ENCODE measurements at regions of chr12 and their contacts with region 1.

Region 1: DNA sequence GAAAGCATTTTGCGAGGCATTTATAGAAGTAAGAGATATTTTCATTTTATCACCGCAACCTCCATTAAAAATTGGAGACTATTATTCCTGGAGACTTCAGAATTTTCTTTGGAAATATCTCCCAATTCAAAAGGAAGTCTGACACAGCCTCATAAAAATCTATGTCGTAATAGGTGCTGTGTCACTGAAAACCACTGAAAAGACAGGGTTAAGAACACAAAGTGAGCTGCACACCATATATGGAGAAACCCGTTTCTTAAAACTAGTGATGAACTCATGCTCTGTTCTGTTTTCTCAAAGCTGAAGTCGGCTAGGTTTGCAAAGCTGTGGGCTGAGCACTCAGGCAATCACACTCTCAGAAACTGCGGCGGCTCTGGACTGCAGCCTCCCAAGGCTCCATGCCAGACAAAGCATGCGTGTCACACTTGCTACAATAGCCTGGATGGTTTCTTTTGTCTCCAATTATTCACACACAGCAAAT is at the start of gene GLIPR1:
- DNase-seq: peak; percentile 43 to 84 (median 77)
- H3K4me3 ChIP-seq: peak within 1 kb of the TSS; percentile 80
- H3K4me3 Mint-ChIP-seq: peak within 1 kb of the TSS; percentile 96 to 99 (median 97)
- H3K27ac ChIP-seq: peak within 1 kb of the TSS; percentile 80
- H3K27ac Mint-ChIP-seq: peak within 1 kb of the TSS; percentile 86 to 98 (median 97)
- H3K4me1 ChIP-seq: peaks cover 65% of the 10 kb centered on the region
- H3K4me1 Mint-ChIP-seq: peaks cover 75 to 83% (median 83%) of the 10 kb centered on the region in 3 donors
- H3K27me3 ChIP-seq: no peaks in the 10 kb centered on the region
- H3K27me3 Mint-ChIP-seq: peaks cover 0 to 2% of the 10 kb centered on the region in 2 donors
- total RNA-seq, gene GLIPR1: 22.2 to 22.8 TPM

Region 2: DNA sequence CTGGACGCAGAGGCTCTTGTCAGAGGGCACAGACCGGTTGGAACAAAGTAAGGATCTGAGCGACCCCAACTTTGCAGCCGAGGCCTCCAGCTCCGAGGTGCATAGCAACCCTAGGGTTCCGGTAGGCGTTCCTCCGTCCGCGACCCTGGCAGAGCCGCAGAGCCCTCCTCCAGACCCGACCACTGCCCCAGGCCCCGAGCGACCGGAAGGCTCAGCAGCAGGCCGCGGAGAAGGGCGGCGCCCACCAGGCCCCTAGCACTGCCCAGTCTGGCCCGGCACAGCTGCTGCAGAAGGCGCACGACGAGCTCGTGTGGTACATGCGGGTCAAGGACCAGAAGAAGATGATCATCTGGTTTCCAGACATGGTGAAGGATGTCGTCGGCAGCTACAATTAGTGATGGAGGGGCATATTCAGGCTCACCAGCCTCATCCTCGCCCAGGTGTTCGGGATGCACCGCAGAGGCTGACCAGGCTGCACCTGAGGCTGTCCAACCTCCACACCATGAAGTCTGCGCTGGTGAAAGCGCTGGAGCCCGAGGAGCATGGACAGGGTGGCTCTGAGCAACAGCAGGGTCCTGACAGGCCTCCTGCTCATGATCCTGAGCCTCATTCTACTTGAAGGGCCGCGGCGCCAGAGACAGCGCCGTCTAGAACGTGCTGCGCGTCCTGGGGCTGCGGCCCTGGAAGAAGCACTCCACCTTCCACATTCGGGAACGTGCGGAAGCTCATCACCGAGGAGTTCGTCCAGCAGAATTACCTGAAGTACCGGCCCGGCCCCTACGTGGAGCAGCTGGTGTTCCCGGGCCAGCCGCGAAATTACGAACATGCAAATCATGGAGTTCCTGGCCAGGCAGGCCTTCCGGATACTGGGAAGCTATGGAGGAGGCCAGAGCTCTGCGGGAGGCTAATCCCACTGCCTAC is 174.8 kb before region 1 on chr12:
- CTCF ChIA-PET with region 1: no interaction called
- POLR2A ChIA-PET with region 1: interaction called, 10 read pairs
- DNase-seq: no peak
- H3K4me3 ChIP-seq: no peak overlapping the region
- H3K4me3 Mint-ChIP-seq: no peak overlapping the region
- H3K27ac ChIP-seq: no peak overlapping the region
- H3K27ac Mint-ChIP-seq: no peak overlapping the region
- H3K4me1 ChIP-seq: no peaks in the 10 kb centered on the region
- H3K4me1 Mint-ChIP-seq: no peaks in the 10 kb centered on the region
- H3K27me3 ChIP-seq: no peaks in the 10 kb centered on the region
- H3K27me3 Mint-ChIP-seq: no peaks in the 10 kb centered on the region

Region 3: DNA sequence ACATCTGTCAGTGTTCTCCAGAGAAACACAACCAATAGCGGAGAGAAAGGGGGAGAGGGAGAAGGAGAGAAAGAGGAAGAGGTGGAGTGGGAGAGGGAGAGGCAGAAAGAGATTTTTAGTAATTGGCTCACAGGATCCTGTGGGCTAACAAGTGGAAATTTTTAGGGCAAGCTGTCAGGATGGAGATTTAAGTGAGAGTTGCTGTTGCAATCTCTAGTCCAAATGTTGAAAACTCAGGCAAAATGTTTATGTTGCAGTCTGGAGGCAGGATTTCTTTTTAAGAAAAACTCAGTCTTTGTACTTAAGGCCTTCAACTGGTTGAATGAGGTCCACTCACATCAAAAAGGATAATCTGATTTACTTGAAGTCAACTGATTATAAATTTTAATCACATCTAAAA is 102.2 kb before region 1 on chr12:
- CTCF ChIA-PET with region 1: no interaction called
- POLR2A ChIA-PET with region 1: no interaction called
- DNase-seq: no peak
- H3K4me3 ChIP-seq: no peak overlapping the region
- H3K4me3 Mint-ChIP-seq: no peak overlapping the region
- H3K27ac ChIP-seq: no peak overlapping the region
- H3K27ac Mint-ChIP-seq: no peak overlapping the region
- H3K4me1 ChIP-seq: no peaks in the 10 kb centered on the region
- H3K4me1 Mint-ChIP-seq: no peaks in the 10 kb centered on the region
- H3K27me3 ChIP-seq: no peaks in the 10 kb centered on the region
- H3K27me3 Mint-ChIP-seq: peaks cover 0 to 1% of the 10 kb centered on the region in 2 donors

Region 4: DNA sequence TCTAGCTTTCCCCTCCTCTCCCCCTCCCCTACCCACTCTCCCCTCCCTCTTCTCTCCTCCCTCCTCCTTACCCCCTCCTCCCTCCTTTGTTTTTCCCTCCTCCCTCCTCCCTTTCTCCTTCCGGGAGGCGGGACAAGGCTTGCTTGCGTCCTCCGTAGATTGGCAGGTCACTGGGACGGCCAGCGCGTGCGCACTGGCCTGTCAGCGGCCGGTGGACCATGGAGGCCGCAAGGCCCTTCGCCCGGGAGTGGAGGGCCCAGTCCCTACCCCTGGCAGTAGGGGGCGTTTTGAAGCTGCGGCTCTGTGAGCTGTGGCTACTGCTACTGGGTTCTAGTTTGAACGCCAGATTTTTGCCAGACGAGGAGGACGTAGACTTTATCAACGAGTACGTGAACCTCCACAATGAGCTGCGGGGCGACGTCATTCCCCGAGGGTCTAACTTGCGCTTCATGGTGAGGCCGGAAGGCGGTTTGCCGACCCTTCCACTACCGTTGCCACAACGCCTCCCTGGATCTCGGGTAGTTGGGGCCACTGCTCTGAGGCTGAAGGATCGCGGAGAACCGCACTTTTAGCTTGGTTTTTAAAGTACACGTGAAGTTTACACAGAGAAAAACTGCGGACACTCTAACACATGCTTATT is 89.5 kb before region 1 on chr12 and contains the start of gene GLIPR1L2:
- CTCF ChIA-PET with region 1: interaction called, 25 read pairs
- POLR2A ChIA-PET with region 1: interaction called, 12 read pairs
- DNase-seq: peak; percentile 78 to 92 (median 83)
- H3K4me3 ChIP-seq: peak within 1 kb of the TSS; percentile 94
- H3K4me3 Mint-ChIP-seq: peak within 1 kb of the TSS; percentile 89 to 96 (median 95)
- H3K27ac ChIP-seq: peak within 1 kb of the TSS; percentile 83
- H3K27ac Mint-ChIP-seq: peak within 1 kb of the TSS; percentile 96 to 99 (median 98)
- H3K4me1 ChIP-seq: peaks cover 27% of the 10 kb centered on the region
- H3K4me1 Mint-ChIP-seq: peaks cover 48 to 74% (median 50%) of the 10 kb centered on the region in 3 donors
- H3K27me3 ChIP-seq: no peaks in the 10 kb centered on the region
- H3K27me3 Mint-ChIP-seq: no peaks in the 10 kb centered on the region
- total RNA-seq, gene GLIPR1L2: not detected

Region 5: GRCh38 chr12:75414671-75415070 is 65.8 kb before region 1 on chr12:
- CTCF ChIA-PET with region 1: no interaction called
- POLR2A ChIA-PET with region 1: no interaction called
- DNase-seq: no peak
- H3K4me3 ChIP-seq: no peak overlapping the region
- H3K4me3 Mint-ChIP-seq: no peak overlapping the region
- H3K27ac ChIP-seq: no peak overlapping the region
- H3K27ac Mint-ChIP-seq: no peak overlapping the region
- H3K4me1 ChIP-seq: no peaks in the 10 kb centered on the region
- H3K4me1 Mint-ChIP-seq: no peaks in the 10 kb centered on the region
- H3K27me3 ChIP-seq: no peaks in the 10 kb centered on the region
- H3K27me3 Mint-ChIP-seq: no peaks in the 10 kb centered on the region

Region 6: GRCh38 chr12:75437564-75437963 is 42.9 kb before region 1 on chr12:
- CTCF ChIA-PET with region 1: interaction called, 47 read pairs
- POLR2A ChIA-PET with region 1: interaction called, 5 read pairs
- DNase-seq: peak in 1 of 5 donors; percentile 33
- H3K4me3 ChIP-seq: no peak overlapping the region
- H3K4me3 Mint-ChIP-seq: no peak overlapping the region
- H3K27ac ChIP-seq: no peak overlapping the region
- H3K27ac Mint-ChIP-seq: peak overlapping the region in 1 of 8 donors; percentile 10
- H3K4me1 ChIP-seq: peaks cover 8% of the 10 kb centered on the region
- H3K4me1 Mint-ChIP-seq: peaks cover 4 to 15% (median 10%) of the 10 kb centered on the region in 3 donors
- H3K27me3 ChIP-seq: no peaks in the 10 kb centered on the region
- H3K27me3 Mint-ChIP-seq: peaks cover 0 to 4% of the 10 kb centered on the region in 2 donors

Region 7: GRCh38 chr12:75455831-75456230 is 24.7 kb before region 1 on chr12:
- CTCF ChIA-PET with region 1: interaction called, 27 read pairs
- POLR2A ChIA-PET with region 1: interaction called, 7 read pairs
- DNase-seq: no peak
- H3K4me3 ChIP-seq: no peak overlapping the region
- H3K4me3 Mint-ChIP-seq: peak overlapping the region in 1 of 7 donors; percentile 1
- H3K27ac ChIP-seq: no peak overlapping the region
- H3K27ac Mint-ChIP-seq: peak overlapping the region in 1 of 8 donors; percentile 3
- H3K4me1 ChIP-seq: peaks cover 36% of the 10 kb centered on the region
- H3K4me1 Mint-ChIP-seq: peaks cover 48 to 56% (median 50%) of the 10 kb centered on the region in 3 donors
- H3K27me3 ChIP-seq: no peaks in the 10 kb centered on the region
- H3K27me3 Mint-ChIP-seq: no peaks in the 10 kb centered on the region

Region 8: GRCh38 chr12:75505706-75506312 is 25.3 kb after region 1 on chr12:
- CTCF ChIA-PET with region 1: interaction called, 14 read pairs
- POLR2A ChIA-PET with region 1: interaction called, 10 read pairs
- DNase-seq: no peak
- H3K4me3 ChIP-seq: no peak overlapping the region
- H3K4me3 Mint-ChIP-seq: no peak overlapping the region
- H3K27ac ChIP-seq: no peak overlapping the region
- H3K27ac Mint-ChIP-seq: peak overlapping the region in 7 of 8 donors; percentile 3 to 91 (median 44)
- H3K4me1 ChIP-seq: peaks cover 16% of the 10 kb centered on the region
- H3K4me1 Mint-ChIP-seq: peaks cover 24 to 38% (median 36%) of the 10 kb centered on the region in 3 donors
- H3K27me3 ChIP-seq: no peaks in the 10 kb centered on the region
- H3K27me3 Mint-ChIP-seq: no peaks in the 10 kb centered on the region

Region 9: DNA sequence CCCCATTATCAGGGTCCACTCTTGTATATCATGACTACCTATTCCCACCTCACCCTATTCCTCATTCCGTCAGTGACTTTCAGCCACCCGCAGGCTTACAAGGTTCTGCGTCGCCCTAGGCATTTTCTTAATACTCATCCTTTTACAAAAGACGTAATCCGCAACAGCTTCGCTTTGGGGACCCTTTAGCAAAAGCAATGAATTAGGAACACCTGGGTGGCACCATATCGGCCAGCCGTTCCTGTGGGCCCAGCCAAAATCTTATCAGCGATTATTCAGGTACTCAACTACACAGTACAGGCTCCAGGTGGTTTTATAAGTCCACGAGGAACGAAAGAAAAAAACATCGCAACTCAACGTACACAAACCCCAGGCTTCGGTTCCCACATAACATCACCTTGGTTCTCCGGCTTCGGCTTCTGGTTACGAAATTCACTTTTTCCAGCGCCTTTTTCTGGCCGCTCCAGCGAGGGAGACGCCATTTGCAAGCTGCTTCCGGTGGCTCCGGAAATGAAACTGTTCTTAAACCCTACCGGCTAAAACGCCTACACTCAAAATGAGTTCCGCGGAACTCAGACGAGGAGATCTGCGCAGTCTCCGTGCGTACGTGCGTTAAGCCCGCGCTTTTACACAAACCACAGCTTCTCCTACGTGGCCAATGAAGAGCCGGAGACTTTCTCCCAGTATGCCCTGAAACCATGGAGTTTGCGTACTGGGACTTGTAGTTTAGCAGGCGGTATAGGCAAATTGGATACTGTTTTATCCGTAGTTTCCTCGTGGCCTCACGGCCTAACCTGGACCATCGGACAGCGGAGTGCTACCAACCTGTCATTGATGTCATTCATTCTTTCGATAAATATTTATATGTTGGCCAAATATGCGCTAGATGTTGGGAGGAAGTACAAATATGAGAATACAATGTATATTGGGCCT is 30.9 kb after region 1 on chr12 and contains the start of gene KRR1:
- CTCF ChIA-PET with region 1: interaction called, 14 read pairs
- POLR2A ChIA-PET with region 1: interaction called, 10 read pairs
- DNase-seq: peak; percentile 76 to 93 (median 87)
- H3K4me3 ChIP-seq: peak within 1 kb of the TSS; percentile 74
- H3K4me3 Mint-ChIP-seq: peak within 1 kb of the TSS; percentile 92 to 100 (median 99)
- H3K27ac ChIP-seq: peak within 1 kb of the TSS; percentile 87
- H3K27ac Mint-ChIP-seq: peak within 1 kb of the TSS; percentile 87 to 100 (median 99)
- H3K4me1 ChIP-seq: peaks cover 21% of the 10 kb centered on the region
- H3K4me1 Mint-ChIP-seq: peaks cover 35 to 44% (median 42%) of the 10 kb centered on the region in 3 donors
- H3K27me3 ChIP-seq: no peaks in the 10 kb centered on the region
- H3K27me3 Mint-ChIP-seq: no peaks in the 10 kb centered on the region
- total RNA-seq, gene KRR1: 143 to 151 TPM